K562 (cell line): ENCODE measurements at regions of chr18 and their contacts with region 1.

Region 1: DNA sequence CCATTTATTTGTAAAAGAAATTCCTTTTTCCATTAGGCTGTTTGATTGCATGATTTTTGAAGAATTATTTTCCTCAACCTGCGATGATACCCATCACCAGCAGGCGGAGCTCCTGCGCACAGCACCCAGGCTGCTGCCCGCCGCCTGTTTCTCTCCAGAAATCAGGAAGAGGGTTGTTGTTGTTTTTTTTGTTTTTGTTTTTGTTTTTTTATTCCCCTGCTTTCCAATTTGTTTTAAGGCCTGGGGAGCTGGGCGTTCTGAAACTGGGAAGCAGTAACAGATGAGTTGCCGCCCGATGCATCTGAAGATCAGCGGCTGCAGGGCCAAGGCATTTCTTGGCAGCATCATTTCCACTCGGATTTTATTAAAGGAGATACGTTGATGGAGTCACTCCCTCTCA is 132.1 kb downstream of the MBP start:
- DNase-seq: peak; percentile 32 to 61 (median 50)
- ATAC-seq: 0 out of 3 replicates have a peak, but pooled peaks have one; percentile 48
- H3K4me3 ChIP-seq: no peak overlapping the region
- H3K27ac ChIP-seq: no peak overlapping the region
- H3K4me1 ChIP-seq: no peaks in the 10 kb centered on the region; a peak in 1 of 5 replicates
- H3K27me3 ChIP-seq: peaks cover 6 to 39% of the 10 kb centered on the region in 2 experiments; a peak in 4 of 5 replicates
- CTCF ChIP-seq: peak; percentile 79 to 81 (median 80)
- EP300 ChIP-seq: no peak
- POLR2A ChIP-seq: no peak
- RAD21 ChIP-seq: peak; percentile 67 to 74

Region 2: DNA sequence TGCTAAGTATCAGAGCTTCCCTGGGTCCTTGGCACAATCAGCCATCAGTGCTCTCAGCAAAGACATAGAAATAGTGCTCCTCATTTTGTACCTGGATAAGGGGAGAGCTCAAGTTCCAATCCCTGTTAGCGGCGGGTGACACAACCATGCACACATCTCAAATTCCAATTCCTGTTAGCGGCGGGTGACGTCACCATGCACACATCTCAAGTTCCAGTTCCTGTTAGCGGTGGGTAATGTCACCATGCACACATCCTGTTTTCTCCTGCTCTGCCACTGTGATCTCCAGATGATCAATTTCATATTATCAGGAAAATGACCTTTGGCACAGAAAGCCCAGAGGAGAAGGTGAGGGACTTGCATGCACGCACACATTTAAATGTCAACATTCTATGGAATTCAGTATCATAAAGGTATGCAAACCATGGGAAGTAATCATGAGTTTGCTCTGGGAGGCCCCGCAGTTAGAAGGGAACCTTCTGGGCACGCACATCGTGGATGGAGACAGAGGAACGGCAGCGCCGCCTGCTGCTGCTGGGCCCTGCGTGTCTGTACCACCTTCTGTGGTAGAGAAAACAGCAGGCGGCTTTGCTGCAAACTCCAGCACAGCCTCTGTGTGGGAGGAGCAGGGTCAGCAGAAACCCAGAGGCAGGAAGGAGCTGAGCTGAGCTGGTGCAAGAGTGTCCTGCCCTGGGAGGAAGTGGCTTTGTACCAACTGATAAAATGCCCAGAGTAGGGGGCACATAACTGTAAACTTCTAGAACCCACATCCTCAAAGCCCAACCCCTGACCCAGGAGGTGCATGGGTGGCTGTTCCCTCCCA is 54.3 kb after region 1 on chr18:
- CTCF ChIA-PET with region 1: no interaction called
- POLR2A ChIA-PET with region 1: no interaction called
- in situ Hi-C with region 1: no loop called
- intact Hi-C with region 1: loop called (anchors 10 kb)
- DNase-seq: peak; percentile 18 to 47 (median 26)
- ATAC-seq: peak; percentile 91
- H3K4me3 ChIP-seq: no peak overlapping the region
- H3K27ac ChIP-seq: no peak overlapping the region
- H3K4me1 ChIP-seq: no peaks in the 10 kb centered on the region
- H3K27me3 ChIP-seq: peaks cover 6 to 34% of the 10 kb centered on the region in 2 experiments; a peak in 4 of 5 replicates
- CTCF ChIP-seq: peak; percentile 56 to 67 (median 62)
- EP300 ChIP-seq: no peak
- POLR2A ChIP-seq: no peak
- RAD21 ChIP-seq: peak; percentile 33 to 67

Region 3: GRCh38 chr18:77101410-77102258 is 101.1 kb after region 1 on chr18:
- CTCF ChIA-PET with region 1: no interaction called
- POLR2A ChIA-PET with region 1: no interaction called
- in situ Hi-C with region 1: no loop called
- intact Hi-C with region 1: no loop called
- DNase-seq: no peak
- ATAC-seq: no peak
- H3K4me3 ChIP-seq: no peak overlapping the region
- H3K27ac ChIP-seq: no peak overlapping the region
- H3K4me1 ChIP-seq: no peaks in the 10 kb centered on the region
- H3K27me3 ChIP-seq: peaks cover 0 to 20% of the 10 kb centered on the region in 2 experiments; a peak in 3 of 5 replicates
- CTCF ChIP-seq: no peak
- EP300 ChIP-seq: no peak
- POLR2A ChIP-seq: no peak
- RAD21 ChIP-seq: no peak

Region 4: DNA sequence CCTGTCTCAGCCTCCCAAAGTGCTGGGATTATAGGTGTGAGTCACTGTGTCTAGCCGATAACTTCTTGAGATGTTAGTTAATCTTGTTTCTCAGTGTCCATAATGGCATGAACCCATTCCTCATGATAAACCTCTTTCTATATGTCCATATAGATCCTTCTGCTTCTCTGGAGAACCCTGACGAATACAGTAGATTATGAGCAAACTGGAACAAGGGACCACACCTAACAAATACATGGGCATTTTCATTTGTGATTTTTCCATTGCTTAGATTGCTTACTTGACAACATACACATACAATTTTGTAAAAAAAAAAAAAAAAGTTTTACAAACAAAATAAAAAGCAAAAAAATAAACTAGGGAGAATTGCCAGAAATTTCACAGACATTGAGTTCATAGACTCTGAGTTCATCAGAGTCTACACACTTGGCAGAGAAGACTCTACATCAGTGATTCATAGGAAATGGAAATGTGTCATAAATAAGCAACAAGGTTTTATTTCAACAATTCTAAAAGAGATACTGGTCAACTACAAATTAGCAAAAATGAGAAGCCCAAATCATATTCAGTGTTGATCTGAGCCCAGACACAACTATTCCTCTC is 345.8 kb after region 1 on chr18:
- CTCF ChIA-PET with region 1: no interaction called
- POLR2A ChIA-PET with region 1: no interaction called
- in situ Hi-C with region 1: no loop called
- intact Hi-C with region 1: no loop called
- DNase-seq: no peak
- ATAC-seq: no peak
- H3K4me3 ChIP-seq: no peak overlapping the region
- H3K27ac ChIP-seq: no peak overlapping the region
- H3K4me1 ChIP-seq: no peaks in the 10 kb centered on the region
- H3K27me3 ChIP-seq: no peaks in the 10 kb centered on the region
- CTCF ChIP-seq: no peak
- EP300 ChIP-seq: no peak
- POLR2A ChIP-seq: no peak
- RAD21 ChIP-seq: no peak

Region 5: GRCh38 chr18:77645170-77645872 is 644.8 kb after region 1 on chr18:
- CTCF ChIA-PET with region 1: interaction called, 4 read pairs
- POLR2A ChIA-PET with region 1: no interaction called
- in situ Hi-C with region 1: no loop called
- intact Hi-C with region 1: loop called (anchors 5 kb)
- DNase-seq: no peak
- ATAC-seq: no peak
- H3K4me3 ChIP-seq: no peak overlapping the region
- H3K27ac ChIP-seq: no peak overlapping the region
- H3K4me1 ChIP-seq: no peaks in the 10 kb centered on the region
- H3K27me3 ChIP-seq: no peaks in the 10 kb centered on the region
- CTCF ChIP-seq: no peak
- EP300 ChIP-seq: no peak
- POLR2A ChIP-seq: no peak
- RAD21 ChIP-seq: no peak

Region 6: DNA sequence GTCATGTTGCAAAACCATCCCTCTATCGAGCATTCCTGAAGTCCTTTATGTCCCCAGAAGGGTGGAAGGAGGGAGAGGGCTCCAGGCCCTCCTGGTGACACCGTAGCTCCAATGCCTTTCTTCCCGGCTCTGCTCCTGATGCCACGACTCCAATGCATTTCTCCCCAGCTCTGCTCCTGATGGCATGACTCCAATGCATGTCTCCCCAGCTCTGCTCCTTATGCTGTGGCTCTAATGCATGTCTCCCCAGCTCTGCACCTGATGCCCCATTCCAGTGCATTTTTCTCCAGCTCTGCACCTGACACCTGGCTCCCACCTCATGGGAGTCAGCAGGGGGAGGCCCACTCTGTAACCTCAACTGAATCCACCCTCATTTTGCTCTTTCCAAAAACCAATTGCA is 1826.1 kb after region 1 on chr18:
- CTCF ChIA-PET with region 1: no interaction called
- POLR2A ChIA-PET with region 1: no interaction called
- in situ Hi-C with region 1: no loop called
- intact Hi-C with region 1: no loop called
- DNase-seq: no peak
- ATAC-seq: no peak
- H3K4me3 ChIP-seq: no peak overlapping the region
- H3K27ac ChIP-seq: no peak overlapping the region
- H3K4me1 ChIP-seq: no peaks in the 10 kb centered on the region
- H3K27me3 ChIP-seq: peaks cover 6 to 40% of the 10 kb centered on the region in 2 experiments; a peak in 4 of 5 replicates
- CTCF ChIP-seq: no peak
- EP300 ChIP-seq: no peak
- POLR2A ChIP-seq: no peak
- RAD21 ChIP-seq: no peak